ENCODE measurements at regions of chr12 and their contacts with region 1.

Region 1: DNA sequence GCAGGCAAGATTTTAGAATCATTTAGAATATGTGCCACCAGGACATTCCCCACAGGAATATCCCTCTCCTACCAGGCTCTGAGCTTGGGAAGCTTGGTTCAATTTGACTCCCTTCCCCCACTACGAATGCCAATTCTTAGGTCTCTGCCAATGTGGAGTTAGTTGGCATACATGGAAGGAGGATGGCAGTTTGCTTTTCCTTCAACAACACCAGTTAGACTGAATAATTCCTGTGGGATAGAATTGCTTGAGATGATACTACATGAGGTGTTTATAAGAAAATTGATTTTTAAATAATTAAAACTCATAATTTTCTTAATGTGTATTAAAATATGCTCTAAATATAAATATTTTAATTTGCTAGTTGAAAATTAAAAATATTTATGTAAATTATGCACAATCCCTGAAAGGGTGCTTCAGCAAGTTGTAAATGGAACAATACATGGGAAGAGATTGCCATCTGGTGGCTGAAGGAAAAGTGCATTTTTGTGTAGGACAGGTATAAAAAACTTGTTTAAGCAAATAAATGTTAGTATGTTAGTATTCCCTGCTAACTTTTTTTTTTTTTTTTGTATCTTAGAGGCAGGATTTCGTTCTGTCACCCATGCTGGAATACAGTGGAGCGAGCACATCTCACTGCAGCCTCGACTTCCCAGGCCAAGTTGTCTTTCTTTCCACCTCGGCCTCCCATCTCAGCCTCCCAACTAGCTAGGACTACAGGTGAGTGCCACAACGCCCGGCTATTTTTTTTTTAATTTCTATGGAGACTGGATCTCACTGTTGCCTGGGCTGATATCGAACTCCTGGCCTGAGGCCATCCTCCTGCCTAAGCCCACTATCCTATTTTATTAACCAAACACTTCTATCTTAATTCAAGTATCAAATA is 25.8 kb upstream of the STRAP start:
- DNase-seq: peak in 10 of 14 experiments; percentile 19 to 80 (median 40)
- ATAC-seq: peak; percentile 61
- H3K4me3 ChIP-seq: no peak overlapping the region
- H3K4me3 Mint-ChIP-seq: no peak overlapping the region
- H3K27ac ChIP-seq: no peak overlapping the region
- H3K27ac Mint-ChIP-seq: no peak overlapping the region
- H3K4me1 ChIP-seq: no peaks in the 10 kb centered on the region
- H3K4me1 Mint-ChIP-seq: no peaks in the 10 kb centered on the region
- H3K27me3 ChIP-seq: no peaks in the 10 kb centered on the region
- H3K27me3 Mint-ChIP-seq: peaks cover 28% of the 10 kb centered on the region
- CTCF ChIP-seq: peak; percentile 79

Region 2: GRCh38 chr12:15146585-15146984 is 709.8 kb before region 1 on chr12:
- CTCF ChIA-PET with region 1: no interaction called
- POLR2A ChIA-PET with region 1: no interaction called
- intact Hi-C with region 1: loop called in 1 of 2 experiments (anchors 10 kb)
- DNase-seq: no peak
- ATAC-seq: no peak
- H3K4me3 ChIP-seq: no peak overlapping the region
- H3K4me3 Mint-ChIP-seq: no peak overlapping the region
- H3K27ac ChIP-seq: no peak overlapping the region
- H3K27ac Mint-ChIP-seq: no peak overlapping the region
- H3K4me1 ChIP-seq: no peaks in the 10 kb centered on the region
- H3K4me1 Mint-ChIP-seq: no peaks in the 10 kb centered on the region
- H3K27me3 ChIP-seq: peaks cover 4 to 7% of the 10 kb centered on the region in 2 experiments
- H3K27me3 Mint-ChIP-seq: peaks cover 28% of the 10 kb centered on the region
- CTCF ChIP-seq: no peak

Region 3: GRCh38 chr12:15227004-15227679 is 629.2 kb before region 1 on chr12:
- CTCF ChIA-PET with region 1: no interaction called
- POLR2A ChIA-PET with region 1: no interaction called
- intact Hi-C with region 1: loop called in 1 of 2 experiments (anchors 2 kb)
- DNase-seq: peak in 7 of 14 experiments; percentile 2 to 43 (median 20)
- ATAC-seq: no peak
- H3K4me3 ChIP-seq: no peak overlapping the region
- H3K4me3 Mint-ChIP-seq: no peak overlapping the region
- H3K27ac ChIP-seq: no peak overlapping the region
- H3K27ac Mint-ChIP-seq: no peak overlapping the region
- H3K4me1 ChIP-seq: no peaks in the 10 kb centered on the region
- H3K4me1 Mint-ChIP-seq: peaks cover 4% of the 10 kb centered on the region
- H3K27me3 ChIP-seq: peaks cover 3 to 38% of the 10 kb centered on the region in 2 experiments
- H3K27me3 Mint-ChIP-seq: peaks cover 66% of the 10 kb centered on the region
- CTCF ChIP-seq: peak; percentile 41

Region 4: GRCh38 chr12:15276088-15276698 is 580.1 kb before region 1 on chr12:
- CTCF ChIA-PET with region 1: no interaction called
- POLR2A ChIA-PET with region 1: no interaction called
- intact Hi-C with region 1: loop called (anchors 2 kb)
- DNase-seq: peak in 3 of 14 experiments; percentile 11 to 36 (median 32)
- ATAC-seq: no peak
- H3K4me3 ChIP-seq: no peak overlapping the region
- H3K4me3 Mint-ChIP-seq: no peak overlapping the region
- H3K27ac ChIP-seq: no peak overlapping the region
- H3K27ac Mint-ChIP-seq: no peak overlapping the region
- H3K4me1 ChIP-seq: peaks cover 12% of the 10 kb centered on the region
- H3K4me1 Mint-ChIP-seq: peaks cover 10% of the 10 kb centered on the region
- H3K27me3 ChIP-seq: peaks cover 0 to 12% of the 10 kb centered on the region in 2 experiments
- H3K27me3 Mint-ChIP-seq: peaks cover under 1% of the 10 kb centered on the region
- CTCF ChIP-seq: peak; percentile 75

Region 5: DNA sequence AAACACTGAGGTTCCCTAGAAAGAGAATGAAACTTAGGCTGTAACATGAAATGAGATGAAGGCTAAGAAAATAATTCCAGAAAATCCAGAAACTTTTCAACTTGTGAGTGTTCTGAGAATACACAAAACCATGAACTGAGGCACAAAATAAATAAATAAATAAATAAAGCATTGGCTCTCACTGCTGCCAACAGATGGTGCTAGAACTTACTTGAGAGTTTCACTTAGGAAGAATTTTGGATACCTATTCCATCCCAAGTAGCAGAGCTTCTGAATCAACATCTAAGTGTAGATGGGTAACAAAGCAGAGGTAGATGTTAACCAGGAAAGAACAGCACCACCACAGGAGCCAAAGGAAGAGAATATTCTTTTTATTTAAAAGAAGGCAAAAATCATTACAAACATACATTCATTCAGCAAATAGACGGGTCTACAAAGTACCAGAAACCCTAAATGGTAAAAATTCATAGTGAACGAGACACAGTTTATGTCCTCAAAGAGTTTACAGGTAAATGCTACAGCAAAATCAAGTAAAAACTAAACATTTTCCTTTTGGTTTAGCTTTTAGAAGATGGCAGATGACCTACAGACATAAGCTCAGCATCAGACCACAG is 83.8 kb before region 1 on chr12:
- CTCF ChIA-PET with region 1: no interaction called
- POLR2A ChIA-PET with region 1: no interaction called
- intact Hi-C with region 1: loop called in 1 of 2 experiments (anchors 5 kb)
- DNase-seq: peak in 4 of 14 experiments; percentile 6 to 44 (median 30)
- ATAC-seq: no peak
- H3K4me3 ChIP-seq: no peak overlapping the region
- H3K4me3 Mint-ChIP-seq: no peak overlapping the region
- H3K27ac ChIP-seq: no peak overlapping the region
- H3K27ac Mint-ChIP-seq: no peak overlapping the region
- H3K4me1 ChIP-seq: no peaks in the 10 kb centered on the region
- H3K4me1 Mint-ChIP-seq: no peaks in the 10 kb centered on the region
- H3K27me3 ChIP-seq: no peaks in the 10 kb centered on the region
- H3K27me3 Mint-ChIP-seq: peaks cover 32% of the 10 kb centered on the region
- CTCF ChIP-seq: peak; percentile 37

Measured in CD4-positive, alpha-beta T cell (primary cell).